Activated naive CD4-positive, alpha-beta T cell treated with anti-CD3 and anti-CD28 coated beads for 36 hours (primary cell): ENCODE measurements at regions of chr2 and their contacts with region 1.

Region 1: GRCh38 chr2:176140513-176141317 is 10.6 kb upstream of the HOXD4 start:
- DNase-seq: peak; percentile 74
- H3K4me3 Mint-ChIP-seq: peak overlapping the region; percentile 42
- H3K27ac Mint-ChIP-seq: no peak overlapping the region
- H3K4me1 Mint-ChIP-seq: peaks cover 21% of the 10 kb centered on the region
- H3K27me3 Mint-ChIP-seq: peaks cover 83% of the 10 kb centered on the region

Region 2: DNA sequence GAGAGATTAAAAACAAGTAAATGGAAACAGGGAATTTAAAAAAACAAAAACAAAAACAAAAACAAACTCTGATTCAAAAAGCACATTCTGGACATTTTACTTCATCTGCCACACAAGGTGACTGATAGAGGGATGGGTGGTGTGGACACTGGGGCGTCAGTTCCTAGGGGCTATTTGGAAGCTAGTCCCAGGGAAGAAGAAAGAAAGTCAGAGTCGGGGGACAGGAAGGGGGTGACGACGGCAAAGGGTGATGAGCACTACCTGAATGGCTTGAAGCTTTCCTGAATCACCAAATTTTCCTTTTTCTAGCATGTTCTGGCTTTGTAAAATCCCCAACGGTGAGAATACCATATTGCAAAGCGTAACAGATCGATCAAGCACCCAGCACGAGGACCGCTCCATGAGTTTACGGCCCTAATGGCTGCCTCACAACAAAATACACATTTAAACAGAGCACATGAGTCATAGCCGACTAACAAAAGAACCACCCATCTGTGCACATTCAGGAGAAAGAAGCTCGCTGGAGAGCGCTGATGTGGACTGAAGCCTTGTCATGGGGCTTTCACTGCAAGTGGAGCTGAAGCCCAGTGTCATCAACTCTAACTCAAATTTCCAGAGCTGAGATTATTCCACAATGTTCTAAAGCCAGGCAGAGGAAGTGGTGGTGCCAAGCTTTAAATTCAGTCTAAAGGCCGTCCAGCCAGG is 317.6 kb before region 1 on chr2:
- CTCF ChIA-PET with region 1: no interaction called
- intact Hi-C with region 1: no loop called
- DNase-seq: no peak
- H3K4me3 Mint-ChIP-seq: no peak overlapping the region
- H3K27ac Mint-ChIP-seq: no peak overlapping the region
- H3K4me1 Mint-ChIP-seq: no peaks in the 10 kb centered on the region
- H3K27me3 Mint-ChIP-seq: peaks cover 22% of the 10 kb centered on the region

Region 3: DNA sequence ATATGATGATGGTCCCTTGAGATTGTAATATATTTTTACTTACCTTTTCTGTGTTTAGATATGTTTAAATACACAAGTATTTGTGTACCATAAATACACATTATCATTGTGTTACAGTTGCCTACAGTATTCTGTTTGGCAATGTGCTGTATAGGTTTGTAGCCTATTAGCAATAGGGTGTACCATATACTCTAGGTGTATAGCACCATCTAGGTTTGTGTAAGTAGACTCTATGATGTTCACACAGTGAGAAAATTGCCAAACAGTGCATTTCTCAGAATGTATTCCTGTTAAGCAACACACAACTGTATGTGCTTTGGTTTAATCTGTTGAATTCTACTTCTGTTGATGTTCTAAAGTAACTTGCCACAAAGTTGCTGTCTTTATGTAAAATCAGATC is 193.0 kb after region 1 on chr2:
- CTCF ChIA-PET with region 1: no interaction called
- intact Hi-C with region 1: loop called (anchors 1 kb)
- DNase-seq: no peak
- H3K4me3 Mint-ChIP-seq: no peak overlapping the region
- H3K27ac Mint-ChIP-seq: no peak overlapping the region
- H3K4me1 Mint-ChIP-seq: no peaks in the 10 kb centered on the region
- H3K27me3 Mint-ChIP-seq: no peaks in the 10 kb centered on the region

Region 4: GRCh38 chr2:176405477-176405876 is 264.8 kb after region 1 on chr2:
- CTCF ChIA-PET with region 1: no interaction called
- intact Hi-C with region 1: no loop called
- DNase-seq: no peak
- H3K4me3 Mint-ChIP-seq: no peak overlapping the region
- H3K27ac Mint-ChIP-seq: no peak overlapping the region
- H3K4me1 Mint-ChIP-seq: no peaks in the 10 kb centered on the region
- H3K27me3 Mint-ChIP-seq: peaks cover 10% of the 10 kb centered on the region

Region 5: GRCh38 chr2:176454893-176455811 is 314.4 kb after region 1 on chr2:
- CTCF ChIA-PET with region 1: interaction called, 93 read pairs
- intact Hi-C with region 1: loop called (anchors 1 kb)
- DNase-seq: peak; percentile 92
- H3K4me3 Mint-ChIP-seq: no peak overlapping the region
- H3K27ac Mint-ChIP-seq: no peak overlapping the region
- H3K4me1 Mint-ChIP-seq: peaks cover 2% of the 10 kb centered on the region
- H3K27me3 Mint-ChIP-seq: peaks cover 37% of the 10 kb centered on the region

Region 6: GRCh38 chr2:176554101-176555048 is 413.7 kb after region 1 on chr2:
- CTCF ChIA-PET with region 1: interaction called, 13 read pairs
- intact Hi-C with region 1: loop called (anchors 1 kb)
- DNase-seq: peak; percentile 45
- H3K4me3 Mint-ChIP-seq: peak overlapping the region; percentile 72
- H3K27ac Mint-ChIP-seq: no peak overlapping the region
- H3K4me1 Mint-ChIP-seq: peaks cover 12% of the 10 kb centered on the region
- H3K27me3 Mint-ChIP-seq: peaks cover 39% of the 10 kb centered on the region

Region 7: GRCh38 chr2:176653479-176654443 is 513.0 kb after region 1 on chr2:
- CTCF ChIA-PET with region 1: interaction called, 13 read pairs
- intact Hi-C with region 1: loop called (anchors 1 kb)
- DNase-seq: peak; percentile 59
- H3K4me3 Mint-ChIP-seq: no peak overlapping the region
- H3K27ac Mint-ChIP-seq: no peak overlapping the region
- H3K4me1 Mint-ChIP-seq: peaks cover 4% of the 10 kb centered on the region
- H3K27me3 Mint-ChIP-seq: peaks cover 32% of the 10 kb centered on the region